ENCODE measurements at regions of chr10 and their contacts with region 1.

Region 1: GRCh38 chr10:70540089-70540788 is 61.7 kb downstream of the PALD1 start:
- DNase-seq: peak; percentile 77
- ATAC-seq: peak; percentile 63
- H3K4me3 Mint-ChIP-seq: no peak overlapping the region
- H3K27ac Mint-ChIP-seq: no peak overlapping the region
- H3K4me1 Mint-ChIP-seq: peaks cover 16% of the 10 kb centered on the region
- H3K27me3 Mint-ChIP-seq: no peaks in the 10 kb centered on the region
- CTCF ChIP-seq: peak; percentile 72

Region 2: DNA sequence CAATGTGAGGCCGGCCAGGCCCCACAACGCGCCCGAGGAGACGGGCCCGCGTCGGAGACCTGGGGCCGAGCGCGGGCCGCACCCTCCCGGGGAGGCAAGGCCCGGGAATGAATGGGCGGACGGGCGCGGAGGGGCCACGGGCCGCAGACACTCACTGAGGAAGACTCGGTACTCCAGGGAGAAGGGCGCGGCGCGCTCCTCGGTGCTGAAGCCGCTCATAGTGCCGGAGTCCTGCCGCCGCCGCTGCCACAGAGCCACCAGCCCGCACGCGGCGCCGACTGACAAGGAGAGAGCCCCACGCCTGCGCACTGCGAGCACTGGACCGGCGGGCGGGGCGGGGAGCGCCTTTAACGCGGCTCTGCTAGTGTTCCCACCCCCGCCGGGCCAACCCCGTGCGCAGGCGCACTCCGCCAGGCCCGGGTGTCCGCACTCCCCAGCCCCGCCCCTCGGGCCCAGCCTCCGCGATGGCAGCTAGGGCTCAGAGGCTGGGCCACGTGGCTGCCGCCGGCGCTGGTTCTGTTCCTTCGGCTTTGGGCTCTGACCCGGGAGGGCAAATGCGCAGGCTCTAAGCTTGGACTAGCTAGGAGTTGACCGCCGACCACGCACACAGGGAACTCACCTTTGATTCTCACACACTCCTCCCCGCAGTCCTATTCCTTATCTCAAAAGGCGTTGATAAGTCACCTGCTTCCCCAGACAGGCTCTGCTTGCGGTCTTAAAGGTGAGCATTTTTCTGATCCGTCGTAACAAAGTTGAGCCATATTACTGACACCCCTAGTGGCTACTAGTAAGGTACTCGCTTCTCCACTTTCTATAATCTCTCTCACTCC is 306.9 kb before region 1 on chr10 and contains the start of gene PPA1:
- CTCF ChIA-PET with region 1: no interaction called
- POLR2A ChIA-PET with region 1: no interaction called
- DNase-seq: peak; percentile 99
- ATAC-seq: peak; percentile 95
- H3K4me3 Mint-ChIP-seq: peak within 1 kb of the TSS; percentile 92
- H3K27ac Mint-ChIP-seq: peak within 1 kb of the TSS; percentile 73
- H3K4me1 Mint-ChIP-seq: peaks cover 8% of the 10 kb centered on the region
- H3K27me3 Mint-ChIP-seq: no peaks in the 10 kb centered on the region; the same call in 1 of the 2 replicates
- CTCF ChIP-seq: no peak
- total RNA-seq, gene PPA1: 140 to 180 TPM (median 144 TPM) in 3 replicates

Region 3: DNA sequence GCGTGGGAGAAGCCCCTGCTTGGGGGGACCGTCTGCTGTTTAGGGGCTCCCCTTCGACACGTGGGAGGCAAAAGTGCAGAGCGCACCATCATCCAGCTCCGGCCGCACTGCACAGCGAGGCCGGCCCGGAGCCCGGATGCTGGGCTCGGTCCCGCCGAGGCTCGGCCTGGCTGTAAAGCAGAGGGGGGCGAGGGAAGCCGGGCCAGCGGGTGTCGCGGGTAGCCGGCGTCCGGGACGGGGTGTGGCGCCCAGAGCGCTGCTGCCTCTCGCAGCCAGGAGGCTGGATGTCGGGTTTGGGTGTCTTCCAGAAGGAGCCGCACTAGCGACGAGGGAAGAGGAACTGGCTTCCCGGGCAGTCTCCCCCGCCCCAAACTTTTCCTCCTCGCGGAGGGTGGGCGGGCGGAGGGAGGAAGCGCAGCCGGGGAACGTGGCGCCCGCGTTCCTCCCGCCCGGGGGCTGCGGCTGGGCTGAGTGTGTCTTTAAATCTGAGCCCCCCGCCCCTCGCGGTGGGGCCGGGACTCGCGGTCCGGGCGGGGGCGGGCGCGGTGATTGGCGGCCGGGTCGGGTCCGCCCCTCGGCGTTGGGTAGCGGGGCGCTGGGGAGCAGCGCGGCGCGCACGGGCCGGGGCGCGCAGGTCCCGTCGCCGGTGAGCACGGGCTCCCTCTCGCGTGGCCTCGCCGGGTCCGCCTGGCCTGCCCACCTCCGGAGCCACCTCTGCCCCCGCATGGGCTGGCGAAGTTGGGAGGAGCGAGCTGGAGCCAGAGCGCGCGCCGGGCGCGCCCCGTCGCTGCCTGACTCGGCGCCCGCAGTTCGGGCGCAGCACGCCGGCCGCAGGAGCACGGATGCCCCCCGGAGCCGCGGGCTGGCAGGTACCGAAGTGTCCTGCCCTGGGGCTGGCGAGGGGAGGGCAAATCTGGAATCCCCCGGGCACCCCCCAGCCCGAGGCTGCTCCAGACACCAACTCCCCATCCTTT is 61.8 kb before region 1 on chr10 and contains the start of gene PALD1:
- CTCF ChIA-PET with region 1: interaction called, 30 read pairs
- POLR2A ChIA-PET with region 1: no interaction called
- DNase-seq: peak; percentile 82
- ATAC-seq: peak; percentile 66
- H3K4me3 Mint-ChIP-seq: peak within 1 kb of the TSS; percentile 78
- H3K27ac Mint-ChIP-seq: peak within 1 kb of the TSS; percentile 57
- H3K4me1 Mint-ChIP-seq: peaks cover 45% of the 10 kb centered on the region
- H3K27me3 Mint-ChIP-seq: peaks cover 2% of the 10 kb centered on the region; the same call in 1 of the 2 replicates
- CTCF ChIP-seq: no peak
- total RNA-seq, gene PALD1: 36.1 to 43.6 TPM (median 38.5 TPM) in 3 replicates

Region 4: GRCh38 chr10:70493660-70494234 is 46.5 kb before region 1 on chr10:
- CTCF ChIA-PET with region 1: interaction called, 15 read pairs
- POLR2A ChIA-PET with region 1: no interaction called
- DNase-seq: peak; percentile 84
- ATAC-seq: peak; percentile 94
- H3K4me3 Mint-ChIP-seq: peak overlapping the region; percentile 5; the same call in 1 of the 2 replicates
- H3K27ac Mint-ChIP-seq: peak overlapping the region; percentile 97
- H3K4me1 Mint-ChIP-seq: peaks cover 67% of the 10 kb centered on the region
- H3K27me3 Mint-ChIP-seq: no peaks in the 10 kb centered on the region
- CTCF ChIP-seq: no peak